AG04450 (cell line): ENCODE measurements at regions of chr1 and their contacts with region 1.

Region 1: GRCh38 chr1:219566951-219567947 is 45.7 kb downstream of the ZC3H11B start:
- DNase-seq: no peak
- H3K4me3 ChIP-seq: no peak overlapping the region
- H3K27ac ChIP-seq: no peak overlapping the region
- H3K27me3 ChIP-seq: peaks cover 2% of the 10 kb centered on the region
- CTCF ChIP-seq: peak; percentile 73

Region 2: GRCh38 chr1:219066631-219067349 is 500.5 kb before region 1 on chr1:
- CTCF ChIA-PET with region 1: interaction called, 12 read pairs
- POLR2A ChIA-PET with region 1: no interaction called
- DNase-seq: no peak
- H3K4me3 ChIP-seq: no peak overlapping the region
- H3K27ac ChIP-seq: peak overlapping the region; percentile 54
- H3K27me3 ChIP-seq: no peaks in the 10 kb centered on the region
- CTCF ChIP-seq: peak; percentile 60

Region 3: GRCh38 chr1:219544163-219544846 is 22.9 kb before region 1 on chr1:
- CTCF ChIA-PET with region 1: no interaction called
- POLR2A ChIA-PET with region 1: no interaction called
- DNase-seq: no peak
- H3K4me3 ChIP-seq: no peak overlapping the region
- H3K27ac ChIP-seq: no peak overlapping the region
- H3K27me3 ChIP-seq: no peaks in the 10 kb centered on the region
- CTCF ChIP-seq: peak; percentile 20; the same call in 1 of the 2 replicates

Region 4: DNA sequence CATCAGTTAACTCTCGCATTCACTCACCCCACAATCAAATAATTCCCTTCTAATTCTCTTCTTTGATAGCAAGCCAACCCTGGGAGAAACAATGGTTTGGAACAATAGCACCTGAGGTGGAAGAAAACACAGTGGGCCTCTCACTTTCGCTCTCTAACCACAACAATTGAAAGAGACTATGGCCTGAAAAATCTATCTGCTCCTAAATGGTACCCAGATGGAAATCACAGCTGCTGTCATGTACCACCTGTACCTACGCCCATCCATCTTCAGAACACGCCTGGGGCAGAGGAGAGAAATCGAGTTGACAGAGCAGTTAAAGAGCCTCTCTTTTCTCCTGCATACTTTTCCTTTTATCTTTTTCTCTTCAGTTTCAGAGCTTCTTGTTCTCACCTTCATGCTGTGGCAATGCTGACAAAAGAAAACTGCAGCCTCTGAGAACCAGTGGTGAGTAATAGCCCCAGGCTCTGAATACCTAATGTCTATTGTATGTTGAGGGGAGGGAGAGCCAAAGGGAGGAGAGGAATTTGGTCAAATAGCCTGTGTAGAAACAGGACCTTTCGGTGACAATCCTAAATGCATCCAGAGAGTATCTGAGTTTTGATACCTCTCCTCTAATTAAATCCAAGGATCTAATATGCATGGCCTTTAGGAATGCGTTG is 12.1 kb before region 1 on chr1:
- CTCF ChIA-PET with region 1: interaction called, 13 read pairs
- POLR2A ChIA-PET with region 1: no interaction called
- DNase-seq: no peak
- H3K4me3 ChIP-seq: no peak overlapping the region
- H3K27ac ChIP-seq: no peak overlapping the region
- H3K27me3 ChIP-seq: no peaks in the 10 kb centered on the region
- CTCF ChIP-seq: no peak

Region 5: GRCh38 chr1:219812491-219813203 is 245.4 kb after region 1 on chr1:
- CTCF ChIA-PET with region 1: interaction called, 30 read pairs
- POLR2A ChIA-PET with region 1: no interaction called
- DNase-seq: peak; percentile 54
- H3K4me3 ChIP-seq: no peak overlapping the region
- H3K27ac ChIP-seq: no peak overlapping the region
- H3K27me3 ChIP-seq: peaks cover 23% of the 10 kb centered on the region
- CTCF ChIP-seq: peak; percentile 95